ENCODE measurements at regions of chr18 and their contacts with region 1.

Region 1: GRCh38 chr18:66226782-66227181 is 377.1 kb downstream of the CDH19 start:
- DNase-seq: no peak
- ATAC-seq: no peak
- H3K4me3 ChIP-seq: no peak overlapping the region
- H3K4me3 Mint-ChIP-seq: no peak overlapping the region
- H3K27ac ChIP-seq: no peak overlapping the region
- H3K27ac Mint-ChIP-seq: no peak overlapping the region
- H3K4me1 ChIP-seq: no peaks in the 10 kb centered on the region
- H3K4me1 Mint-ChIP-seq: no peaks in the 10 kb centered on the region
- H3K27me3 ChIP-seq: no peaks in the 10 kb centered on the region
- H3K27me3 Mint-ChIP-seq: no peaks in the 10 kb centered on the region
- CTCF ChIP-seq: no peak

Region 2: GRCh38 chr18:66280470-66280869 is 53.7 kb after region 1 on chr18:
- CTCF ChIA-PET with region 1: no interaction called
- POLR2A ChIA-PET with region 1: no interaction called
- intact Hi-C with region 1: loop called in 1 of 2 experiments (anchors 5 kb)
- DNase-seq: no peak
- ATAC-seq: no peak
- H3K4me3 ChIP-seq: no peak overlapping the region
- H3K4me3 Mint-ChIP-seq: no peak overlapping the region
- H3K27ac ChIP-seq: no peak overlapping the region
- H3K27ac Mint-ChIP-seq: no peak overlapping the region
- H3K4me1 ChIP-seq: no peaks in the 10 kb centered on the region
- H3K4me1 Mint-ChIP-seq: no peaks in the 10 kb centered on the region
- H3K27me3 ChIP-seq: no peaks in the 10 kb centered on the region
- H3K27me3 Mint-ChIP-seq: no peaks in the 10 kb centered on the region
- CTCF ChIP-seq: no peak

Region 3: DNA sequence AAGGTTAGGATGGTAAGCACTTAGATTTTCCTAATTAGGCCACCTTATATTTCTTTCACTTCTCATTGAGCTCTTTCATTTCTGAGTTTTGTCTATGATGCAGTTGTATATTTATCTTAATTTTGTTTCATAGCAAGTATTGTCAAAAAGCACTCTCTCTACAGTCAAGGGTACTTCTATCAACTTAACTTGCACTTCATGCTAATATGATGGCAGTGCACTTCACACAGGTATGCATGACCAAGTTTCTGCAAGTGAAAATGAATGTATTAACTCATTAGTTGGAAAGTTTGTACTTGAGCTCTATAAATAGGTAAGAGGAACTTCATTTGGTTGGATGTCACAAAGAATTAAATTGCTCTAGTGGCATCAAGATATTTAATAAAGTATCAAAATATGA is 428.6 kb after region 1 on chr18:
- CTCF ChIA-PET with region 1: no interaction called
- POLR2A ChIA-PET with region 1: no interaction called
- intact Hi-C with region 1: no loop called
- DNase-seq: no peak
- ATAC-seq: no peak
- H3K4me3 ChIP-seq: no peak overlapping the region
- H3K4me3 Mint-ChIP-seq: no peak overlapping the region
- H3K27ac ChIP-seq: no peak overlapping the region
- H3K27ac Mint-ChIP-seq: no peak overlapping the region
- H3K4me1 ChIP-seq: no peaks in the 10 kb centered on the region
- H3K4me1 Mint-ChIP-seq: no peaks in the 10 kb centered on the region
- H3K27me3 ChIP-seq: no peaks in the 10 kb centered on the region
- H3K27me3 Mint-ChIP-seq: no peaks in the 10 kb centered on the region
- CTCF ChIP-seq: no peak